CD4-positive, alpha-beta memory T cell (primary cell): ENCODE measurements at regions of chr10 and their contacts with region 1.

Region 1: GRCh38 chr10:110535958-110536891 is 31.3 kb upstream of the SMC3 start:
- DNase-seq: peak; percentile 32 to 82 (median 48)
- H3K4me3 ChIP-seq: no peak overlapping the region
- H3K4me3 Mint-ChIP-seq: peak overlapping the region in 6 of 8 donors; percentile 23 to 72 (median 60)
- H3K27ac ChIP-seq: no peak overlapping the region
- H3K27ac Mint-ChIP-seq: peak overlapping the region in 6 of 7 donors; percentile 8 to 85 (median 60)
- H3K4me1 ChIP-seq: peaks cover 12% of the 10 kb centered on the region
- H3K4me1 Mint-ChIP-seq: peaks cover 13 to 19% (median 16%) of the 10 kb centered on the region in 4 donors
- H3K27me3 ChIP-seq: no peaks in the 10 kb centered on the region
- H3K27me3 Mint-ChIP-seq: no peaks in the 10 kb centered on the region

Region 2: DNA sequence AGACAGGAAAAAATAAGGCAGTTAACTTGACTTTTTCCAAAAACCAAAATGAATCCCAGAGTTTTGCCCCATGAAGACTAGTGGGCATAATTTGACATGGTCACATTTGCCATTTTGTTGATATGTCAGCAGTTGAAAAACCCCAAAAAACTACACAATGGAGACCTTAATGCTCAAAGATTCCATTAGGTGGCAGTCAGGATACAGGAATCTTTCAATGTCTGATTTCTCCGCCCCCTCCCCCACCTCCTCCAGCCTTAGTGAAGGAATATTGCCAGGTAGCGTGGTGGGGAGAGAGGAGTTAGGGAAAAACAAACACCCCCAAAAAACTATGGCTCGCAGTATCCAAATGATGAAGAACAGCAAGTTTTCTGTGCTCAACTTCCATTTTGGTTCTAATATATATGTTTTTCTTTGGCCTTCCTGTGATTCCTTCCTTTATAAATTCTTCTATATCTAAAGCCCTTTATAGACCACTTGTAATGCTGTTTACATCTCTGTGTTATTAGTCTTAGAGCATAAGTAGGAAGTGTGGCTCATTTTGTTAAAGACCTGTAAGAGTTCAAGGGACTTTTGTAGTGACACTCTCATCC is 224.8 kb before region 1 on chr10:
- CTCF ChIA-PET with region 1: interaction called, 7 read pairs
- POLR2A ChIA-PET with region 1: interaction called, 4 read pairs
- intact Hi-C with region 1: loop called (anchors 1 kb)
- DNase-seq: peak; percentile 43 to 56 (median 48)
- H3K4me3 ChIP-seq: no peak overlapping the region
- H3K4me3 Mint-ChIP-seq: no peak overlapping the region
- H3K27ac ChIP-seq: no peak overlapping the region
- H3K27ac Mint-ChIP-seq: peak overlapping the region in 1 of 7 donors; percentile 9
- H3K4me1 ChIP-seq: peaks cover 1% of the 10 kb centered on the region
- H3K4me1 Mint-ChIP-seq: peaks cover 0 to 7% (median 0%) of the 10 kb centered on the region in 4 donors
- H3K27me3 ChIP-seq: no peaks in the 10 kb centered on the region
- H3K27me3 Mint-ChIP-seq: no peaks in the 10 kb centered on the region

Region 3: GRCh38 chr10:110414563-110415309 is 121.5 kb before region 1 on chr10:
- CTCF ChIA-PET with region 1: no interaction called
- POLR2A ChIA-PET with region 1: no interaction called
- intact Hi-C with region 1: loop called (anchors 2 kb)
- DNase-seq: peak; percentile 88 to 99 (median 94)
- H3K4me3 ChIP-seq: peak overlapping the region in 1 of 2 donors; percentile 5
- H3K4me3 Mint-ChIP-seq: peak overlapping the region; percentile 22 to 71 (median 62)
- H3K27ac ChIP-seq: peak overlapping the region; percentile 62
- H3K27ac Mint-ChIP-seq: peak overlapping the region; percentile 89 to 98 (median 93)
- H3K4me1 ChIP-seq: peaks cover 43% of the 10 kb centered on the region
- H3K4me1 Mint-ChIP-seq: peaks cover 25 to 60% (median 33%) of the 10 kb centered on the region in 4 donors
- H3K27me3 ChIP-seq: no peaks in the 10 kb centered on the region
- H3K27me3 Mint-ChIP-seq: no peaks in the 10 kb centered on the region

Region 4: GRCh38 chr10:110502851-110503301 is 33.3 kb before region 1 on chr10:
- CTCF ChIA-PET with region 1: interaction called, 6 read pairs
- POLR2A ChIA-PET with region 1: interaction called, 4 read pairs
- intact Hi-C with region 1: loop called (anchors 2 kb)
- DNase-seq: peak in 1 of 5 donors; percentile 14
- H3K4me3 ChIP-seq: peak overlapping the region in 1 of 2 donors; percentile 28
- H3K4me3 Mint-ChIP-seq: peak overlapping the region; percentile 61 to 98 (median 94)
- H3K27ac ChIP-seq: peak overlapping the region; percentile 79
- H3K27ac Mint-ChIP-seq: peak overlapping the region; percentile 90 to 97 (median 95)
- H3K4me1 ChIP-seq: peaks cover 80% of the 10 kb centered on the region
- H3K4me1 Mint-ChIP-seq: peaks cover 64 to 90% (median 81%) of the 10 kb centered on the region in 4 donors
- H3K27me3 ChIP-seq: no peaks in the 10 kb centered on the region
- H3K27me3 Mint-ChIP-seq: no peaks in the 10 kb centered on the region